AG04449 (cell line): ENCODE measurements at regions of chr18 and their contacts with region 1.

Region 1: DNA sequence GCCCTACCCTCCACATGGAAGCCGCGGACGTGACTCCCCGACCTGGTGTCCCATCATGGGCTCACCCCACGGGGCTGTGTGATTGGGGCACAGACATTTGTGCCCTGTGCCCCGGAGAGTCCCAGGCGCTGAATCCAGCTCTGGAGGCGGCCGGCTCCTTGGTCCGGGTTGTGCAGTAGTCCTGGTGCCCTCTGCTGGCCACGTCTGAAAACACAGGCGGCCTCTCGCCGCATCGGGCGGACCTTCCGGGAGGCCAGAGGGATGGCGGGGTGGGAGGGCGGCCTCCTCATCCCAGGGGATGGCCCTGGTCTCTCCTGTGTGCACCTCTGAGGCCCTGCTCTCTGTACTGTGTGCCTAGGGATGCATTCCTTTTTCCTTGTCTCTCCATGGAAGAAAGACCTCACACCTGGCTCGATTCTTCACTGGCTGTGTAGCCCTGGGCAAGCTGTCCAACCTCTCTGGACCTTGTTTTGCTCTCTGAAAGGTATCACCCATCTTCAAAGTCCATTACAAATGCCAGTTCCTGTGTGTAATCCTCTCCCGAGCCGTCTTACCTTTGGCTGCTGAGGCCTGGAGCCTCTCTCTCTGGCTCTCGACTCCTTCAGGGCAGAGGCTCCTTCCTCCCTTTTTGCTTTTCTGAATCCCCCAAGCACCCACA is 27.6 kb downstream of the CELF4 start:
- DNase-seq: no peak
- H3K4me3 ChIP-seq: no peak overlapping the region
- CTCF ChIP-seq: peak; percentile 97

Region 2: DNA sequence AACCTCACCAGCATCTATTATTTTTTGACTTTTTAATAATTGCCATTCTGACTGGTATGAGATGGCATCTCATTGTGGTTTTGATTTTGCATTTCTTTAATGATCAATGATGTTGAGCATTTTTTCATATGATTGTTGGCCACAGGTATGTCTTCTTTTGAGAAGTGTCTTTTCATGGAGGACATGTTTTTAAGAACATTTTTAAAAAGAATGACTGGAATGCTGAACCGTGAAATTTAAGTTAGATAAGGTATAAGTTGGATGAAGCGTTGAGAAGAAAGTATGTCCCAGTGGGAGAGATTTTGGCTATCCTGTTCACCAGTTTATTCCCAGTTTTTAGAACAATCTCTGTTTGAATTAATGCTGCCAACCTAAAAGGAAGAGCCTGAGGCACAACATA is 338.3 kb before region 1 on chr18:
- CTCF ChIA-PET with region 1: no interaction called
- POLR2A ChIA-PET with region 1: no interaction called
- DNase-seq: no peak
- H3K4me3 ChIP-seq: no peak overlapping the region
- CTCF ChIP-seq: no peak

Region 3: GRCh38 chr18:37385846-37386778 is 151.9 kb before region 1 on chr18:
- CTCF ChIA-PET with region 1: interaction called, 63 read pairs
- POLR2A ChIA-PET with region 1: no interaction called
- DNase-seq: no peak
- H3K4me3 ChIP-seq: no peak overlapping the region
- CTCF ChIP-seq: peak; percentile 33

Region 4: DNA sequence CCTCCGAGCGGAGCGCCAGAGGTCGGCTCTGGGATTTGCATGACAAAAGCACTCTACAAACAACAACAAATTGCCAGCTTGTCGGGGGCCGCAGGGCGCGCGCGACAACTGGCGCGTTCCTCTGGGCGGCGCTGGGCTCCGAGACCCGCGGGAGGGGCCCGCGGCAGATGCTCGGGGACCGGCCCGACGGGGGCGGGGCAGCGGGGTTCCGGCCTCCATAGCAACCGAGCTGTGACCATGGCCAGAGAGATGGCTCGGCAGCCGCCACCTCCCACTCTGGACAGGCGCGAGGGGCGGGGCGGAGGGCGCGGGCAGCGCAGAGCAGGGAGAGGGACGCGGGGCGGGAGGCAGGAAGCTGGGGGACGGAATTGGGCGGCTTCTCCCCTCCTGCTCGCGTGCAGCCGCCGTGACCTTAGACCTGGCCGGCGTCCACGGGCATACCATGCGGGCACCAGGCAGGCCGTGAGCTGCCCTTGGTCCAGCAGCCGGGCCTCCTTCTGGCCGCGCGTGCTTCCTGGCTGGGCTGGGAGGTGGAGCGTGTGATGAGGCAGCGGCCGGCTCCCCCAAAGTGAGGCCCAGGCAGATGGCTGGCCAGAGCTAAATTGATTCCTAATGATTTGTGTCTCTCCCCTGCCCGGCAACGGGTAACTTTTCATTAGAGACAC is 143.9 kb before region 1 on chr18:
- CTCF ChIA-PET with region 1: interaction called, 10 read pairs
- POLR2A ChIA-PET with region 1: no interaction called
- DNase-seq: peak; percentile 10
- H3K4me3 ChIP-seq: peak overlapping the region; percentile 49
- CTCF ChIP-seq: peak; percentile 17